ENCODE measurements at regions of chr3 and their contacts with region 1.

Region 1: DNA sequence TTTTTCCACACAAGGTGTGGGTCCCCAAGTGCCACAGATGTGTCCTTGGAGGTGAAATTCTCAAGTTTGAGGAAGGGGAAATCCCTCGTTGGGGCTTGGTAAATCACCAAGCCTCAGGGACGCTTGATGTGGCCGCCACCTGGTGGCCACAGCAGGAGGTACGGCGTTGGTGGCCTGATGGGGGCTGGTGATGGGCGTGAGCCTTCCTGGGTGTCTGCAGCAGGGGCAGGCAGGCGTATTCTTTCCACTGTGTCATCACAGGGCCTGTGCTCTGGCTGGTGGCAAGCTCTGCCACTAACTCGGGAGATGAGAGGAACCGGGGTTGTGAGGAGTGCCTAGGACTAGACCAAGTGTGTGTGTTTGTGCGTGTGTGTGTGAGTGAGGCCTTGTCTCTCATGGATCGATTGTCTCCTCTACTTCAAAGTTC is 4.2 kb downstream of the ACOX2 start:
- DNase-seq: peak; percentile 63 to 80 (median 73)
- ATAC-seq: peak; percentile 97
- H3K4me3 ChIP-seq: no peak overlapping the region
- H3K4me3 Mint-ChIP-seq: peak overlapping the region in 1 of 10 donors; percentile 50
- H3K27ac ChIP-seq: no peak overlapping the region
- H3K27ac Mint-ChIP-seq: peak overlapping the region in 4 of 9 donors; percentile 23 to 42 (median 31)
- H3K4me1 ChIP-seq: peaks cover 0 to 6% of the 10 kb centered on the region in 2 donors
- H3K4me1 Mint-ChIP-seq: peaks cover 5 to 8% (median 7%) of the 10 kb centered on the region in 7 donors
- H3K27me3 ChIP-seq: no peaks in the 10 kb centered on the region
- H3K27me3 Mint-ChIP-seq: peaks cover 0 to 6% (median 0%) of the 10 kb centered on the region in 5 donors

Region 2: GRCh38 chr3:57575966-57576626 is 956.7 kb before region 1 on chr3:
- CTCF ChIA-PET with region 1: no interaction called
- POLR2A ChIA-PET with region 1: no interaction called
- intact Hi-C with region 1: no loop called
- DNase-seq: no peak
- ATAC-seq: no peak
- H3K4me3 ChIP-seq: no peak overlapping the region
- H3K4me3 Mint-ChIP-seq: no peak overlapping the region
- H3K27ac ChIP-seq: no peak overlapping the region
- H3K27ac Mint-ChIP-seq: peak overlapping the region in 7 of 9 donors; percentile 7 to 86 (median 54)
- H3K4me1 ChIP-seq: no peaks in the 10 kb centered on the region
- H3K4me1 Mint-ChIP-seq: peaks cover 6 to 30% (median 20%) of the 10 kb centered on the region in 7 donors
- H3K27me3 ChIP-seq: no peaks in the 10 kb centered on the region
- H3K27me3 Mint-ChIP-seq: no peaks in the 10 kb centered on the region

Region 3: DNA sequence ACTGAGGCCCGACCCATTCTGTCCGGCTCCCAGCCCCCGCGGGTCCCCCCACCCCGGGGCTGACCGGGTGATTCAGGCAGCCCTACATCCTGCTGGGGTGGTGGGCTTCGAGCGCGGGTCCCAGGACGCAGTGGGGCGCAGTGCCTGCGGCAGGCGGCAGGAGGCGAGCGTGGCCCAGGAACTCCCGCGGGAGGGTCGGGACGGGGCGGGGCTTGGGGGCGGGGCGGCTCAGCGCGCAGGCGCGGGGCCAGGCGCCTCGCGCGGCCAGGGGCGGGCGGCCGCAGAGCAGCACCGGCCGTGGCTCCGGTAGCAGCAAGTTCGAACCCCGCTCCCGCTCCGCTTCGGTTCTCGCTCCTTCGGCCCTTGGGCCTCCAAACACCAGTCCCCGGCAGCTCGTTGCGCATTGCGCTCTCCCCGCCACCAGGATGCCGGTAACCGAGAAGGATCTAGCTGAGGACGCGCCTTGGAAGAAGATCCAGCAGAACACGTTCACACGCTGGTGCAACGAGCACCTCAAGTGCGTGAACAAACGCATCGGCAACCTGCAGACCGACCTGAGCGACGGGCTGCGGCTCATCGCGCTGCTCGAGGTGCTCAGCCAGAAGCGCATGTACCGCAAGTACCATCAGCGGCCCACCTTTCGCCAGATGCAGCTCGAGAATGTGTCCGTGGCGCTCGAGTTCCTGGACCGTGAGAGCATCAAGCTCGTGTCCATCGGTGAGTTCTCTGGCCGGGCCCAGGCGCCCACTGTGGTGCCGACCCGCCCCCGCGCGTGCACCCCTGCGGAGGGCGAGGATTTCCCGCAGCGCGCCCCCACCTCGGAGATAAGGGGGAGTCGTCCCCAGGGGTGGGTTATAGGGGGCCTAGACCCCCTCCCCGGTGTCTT is 524.4 kb before region 1 on chr3 and contains the start of gene FLNB:
- CTCF ChIA-PET with region 1: no interaction called
- POLR2A ChIA-PET with region 1: no interaction called
- intact Hi-C with region 1: loop called in 1 of 2 experiments (anchors 2 kb)
- DNase-seq: peak; percentile 61 to 83 (median 77)
- ATAC-seq: peak; percentile 95
- H3K4me3 ChIP-seq: peak within 1 kb of the TSS; percentile 100
- H3K4me3 Mint-ChIP-seq: peak within 1 kb of the TSS; percentile 78 to 93 (median 90)
- H3K27ac ChIP-seq: peak within 1 kb of the TSS; percentile 66
- H3K27ac Mint-ChIP-seq: peak within 1 kb of the TSS; percentile 61 to 95 (median 81)
- H3K4me1 ChIP-seq: peaks cover 9 to 32% of the 10 kb centered on the region in 2 donors
- H3K4me1 Mint-ChIP-seq: peaks cover 30 to 42% (median 41%) of the 10 kb centered on the region in 7 donors
- H3K27me3 ChIP-seq: no peaks in the 10 kb centered on the region
- H3K27me3 Mint-ChIP-seq: no peaks in the 10 kb centered on the region
- total RNA-seq, gene FLNB: 39.3 to 66.7 (median 64.9) TPM

Region 4: GRCh38 chr3:58188173-58188564 is 344.6 kb before region 1 on chr3:
- CTCF ChIA-PET with region 1: interaction called, 3 read pairs
- POLR2A ChIA-PET with region 1: no interaction called
- intact Hi-C with region 1: loop called (anchors 1 kb)
- DNase-seq: no peak
- ATAC-seq: no peak
- H3K4me3 ChIP-seq: no peak overlapping the region
- H3K4me3 Mint-ChIP-seq: no peak overlapping the region
- H3K27ac ChIP-seq: no peak overlapping the region
- H3K27ac Mint-ChIP-seq: no peak overlapping the region
- H3K4me1 ChIP-seq: no peaks in the 10 kb centered on the region
- H3K4me1 Mint-ChIP-seq: peaks cover 0 to 3% (median 0%) of the 10 kb centered on the region in 7 donors
- H3K27me3 ChIP-seq: no peaks in the 10 kb centered on the region
- H3K27me3 Mint-ChIP-seq: no peaks in the 10 kb centered on the region

Region 5: GRCh38 chr3:58324391-58325390 is 208.1 kb before region 1 on chr3:
- CTCF ChIA-PET with region 1: no interaction called
- POLR2A ChIA-PET with region 1: no interaction called
- intact Hi-C with region 1: loop called (anchors 1 kb)
- DNase-seq: peak in 1 of 9 donors; percentile 26
- ATAC-seq: peak; percentile 27
- H3K4me3 ChIP-seq: no peak overlapping the region
- H3K4me3 Mint-ChIP-seq: peak overlapping the region in 1 of 10 donors; percentile 24
- H3K27ac ChIP-seq: peak overlapping the region; percentile 14
- H3K27ac Mint-ChIP-seq: peak overlapping the region in 8 of 9 donors; percentile 25 to 85 (median 68)
- H3K4me1 ChIP-seq: no peaks in the 10 kb centered on the region
- H3K4me1 Mint-ChIP-seq: peaks cover 0 to 25% (median 18%) of the 10 kb centered on the region in 7 donors
- H3K27me3 ChIP-seq: no peaks in the 10 kb centered on the region
- H3K27me3 Mint-ChIP-seq: no peaks in the 10 kb centered on the region

Region 6: GRCh38 chr3:58414538-58415197 is 118.1 kb before region 1 on chr3:
- CTCF ChIA-PET with region 1: no interaction called
- POLR2A ChIA-PET with region 1: no interaction called
- intact Hi-C with region 1: loop called in 1 of 2 experiments (anchors 5 kb)
- DNase-seq: peak in 7 of 9 donors; percentile 39 to 59 (median 47)
- ATAC-seq: peak; percentile 83
- H3K4me3 ChIP-seq: no peak overlapping the region
- H3K4me3 Mint-ChIP-seq: no peak overlapping the region
- H3K27ac ChIP-seq: no peak overlapping the region
- H3K27ac Mint-ChIP-seq: peak overlapping the region in 3 of 9 donors; percentile 5 to 48 (median 9)
- H3K4me1 ChIP-seq: no peaks in the 10 kb centered on the region
- H3K4me1 Mint-ChIP-seq: peaks cover 2 to 14% (median 8%) of the 10 kb centered on the region in 7 donors
- H3K27me3 ChIP-seq: no peaks in the 10 kb centered on the region
- H3K27me3 Mint-ChIP-seq: no peaks in the 10 kb centered on the region

Region 7: GRCh38 chr3:58463181-58463941 is 69.4 kb before region 1 on chr3:
- CTCF ChIA-PET with region 1: interaction called, 3 read pairs
- POLR2A ChIA-PET with region 1: no interaction called
- intact Hi-C with region 1: loop called (anchors 1 kb)
- DNase-seq: peak; percentile 16 to 76 (median 40)
- ATAC-seq: peak; percentile 98
- H3K4me3 ChIP-seq: peak overlapping the region; percentile 20
- H3K4me3 Mint-ChIP-seq: peak overlapping the region in 7 of 10 donors; percentile 34 to 65 (median 51)
- H3K27ac ChIP-seq: no peak overlapping the region
- H3K27ac Mint-ChIP-seq: no peak overlapping the region
- H3K4me1 ChIP-seq: peaks cover 4 to 7% of the 10 kb centered on the region in 2 donors
- H3K4me1 Mint-ChIP-seq: peaks cover 0 to 12% (median 6%) of the 10 kb centered on the region in 7 donors
- H3K27me3 ChIP-seq: no peaks in the 10 kb centered on the region
- H3K27me3 Mint-ChIP-seq: peaks cover 0 to 7% (median 0%) of the 10 kb centered on the region in 5 donors